Cardiac septum (tissue), 1 donor: ENCODE measurements at regions of chr6 and their contacts with region 1.

Region 1: GRCh38 chr6:43687437-43688347 is at the start of gene MRPS18A:
- DNase-seq: peak; percentile 91
- total RNA-seq, gene MRPS18A: 38.4 TPM

Region 2: DNA sequence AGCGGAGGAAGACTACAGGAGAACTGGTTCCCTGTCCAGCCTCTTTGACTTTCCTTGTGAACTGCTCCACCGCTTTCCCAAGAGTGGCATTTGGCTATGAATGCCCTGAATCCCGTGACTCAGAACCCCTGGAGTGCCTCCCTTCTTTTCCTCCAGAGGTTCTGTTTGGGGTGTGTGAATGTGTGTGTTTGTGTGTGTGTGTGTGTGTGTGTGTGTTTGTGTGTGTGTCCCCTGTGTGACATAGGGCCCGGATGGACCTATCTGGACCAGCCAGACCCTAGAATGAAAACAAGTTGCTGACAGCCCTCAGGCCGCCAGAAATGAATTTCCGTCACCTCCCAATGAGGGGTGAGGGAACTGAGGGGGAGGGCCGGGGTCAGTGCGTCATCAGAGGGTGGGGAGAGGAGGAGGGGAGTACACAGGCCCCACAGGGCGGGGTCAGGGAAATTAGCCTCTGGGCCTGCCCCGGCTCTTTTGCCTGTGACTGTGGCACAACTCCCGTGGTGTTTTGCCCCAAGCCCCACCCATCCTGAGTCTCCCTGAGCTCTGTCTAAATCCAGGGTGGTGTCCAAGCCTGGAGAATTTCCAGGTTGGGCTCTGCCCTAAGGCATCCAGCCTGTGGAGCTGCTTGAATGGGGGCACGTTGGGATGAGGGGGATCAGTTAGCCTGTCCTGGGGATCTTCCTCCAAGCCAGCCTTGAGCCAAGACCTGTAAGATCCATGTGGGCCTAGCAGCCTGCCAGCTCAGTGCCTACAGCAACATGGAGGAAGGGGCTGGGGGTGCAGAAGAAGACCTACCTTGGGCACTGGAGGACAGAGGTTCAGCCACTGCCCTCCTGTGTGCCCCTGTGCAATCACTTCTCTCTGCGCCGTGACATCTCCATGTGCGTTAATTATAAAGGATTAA is 15.1 kb after region 1 on chr6:
- intact Hi-C with region 1: loop called (anchors 2 kb)
- DNase-seq: peak; percentile 94

Region 3: GRCh38 chr6:43714311-43715055 is 26.8 kb after region 1 on chr6:
- intact Hi-C with region 1: loop called (anchors 5 kb)
- DNase-seq: peak; percentile 61